Caco-2 (cell line): ENCODE measurements at regions of chr13 and their contacts with region 1.

Region 1: GRCh38 chr13:80945328-80945727 is 604.4 kb upstream of the SPRY2 start:
- DNase-seq: peak; percentile 8 to 38
- H3K4me3 ChIP-seq: no peak overlapping the region
- H3K4me3 Mint-ChIP-seq: no peak overlapping the region
- H3K27ac Mint-ChIP-seq: no peak overlapping the region
- H3K4me1 ChIP-seq: no peaks in the 10 kb centered on the region
- H3K4me1 Mint-ChIP-seq: no peaks in the 10 kb centered on the region
- H3K27me3 ChIP-seq: no peaks in the 10 kb centered on the region
- H3K27me3 Mint-ChIP-seq: no peaks in the 10 kb centered on the region
- CTCF ChIP-seq: no peak

Region 2: DNA sequence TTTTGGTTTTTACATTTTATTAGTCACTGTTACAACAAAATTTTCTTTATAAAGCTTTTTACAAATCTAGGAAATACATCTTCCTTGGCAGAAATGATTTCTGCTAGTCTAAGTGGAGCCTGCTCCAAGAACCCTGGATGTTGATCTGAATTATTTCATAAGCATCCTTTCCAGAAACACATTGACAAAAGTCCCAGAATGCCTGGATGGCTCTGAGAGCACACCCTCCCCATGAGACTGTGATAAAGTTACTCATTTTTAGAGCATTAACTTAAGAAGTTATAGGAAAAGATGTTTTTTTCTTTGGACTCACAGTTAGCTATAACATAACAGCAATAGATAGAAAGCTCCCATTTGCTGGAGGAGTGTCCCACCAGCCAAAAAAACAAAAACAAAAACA is 44.8 kb before region 1 on chr13:
- CTCF ChIA-PET with region 1: no interaction called
- POLR2A ChIA-PET with region 1: no interaction called
- intact Hi-C with region 1: loop called (anchors 1 kb)
- DNase-seq: no peak
- H3K4me3 ChIP-seq: no peak overlapping the region
- H3K4me3 Mint-ChIP-seq: no peak overlapping the region
- H3K27ac Mint-ChIP-seq: no peak overlapping the region
- H3K4me1 ChIP-seq: no peaks in the 10 kb centered on the region
- H3K4me1 Mint-ChIP-seq: no peaks in the 10 kb centered on the region
- H3K27me3 ChIP-seq: no peaks in the 10 kb centered on the region; the same call in 1 of the 2 replicates
- H3K27me3 Mint-ChIP-seq: no peaks in the 10 kb centered on the region
- CTCF ChIP-seq: no peak

Region 3: DNA sequence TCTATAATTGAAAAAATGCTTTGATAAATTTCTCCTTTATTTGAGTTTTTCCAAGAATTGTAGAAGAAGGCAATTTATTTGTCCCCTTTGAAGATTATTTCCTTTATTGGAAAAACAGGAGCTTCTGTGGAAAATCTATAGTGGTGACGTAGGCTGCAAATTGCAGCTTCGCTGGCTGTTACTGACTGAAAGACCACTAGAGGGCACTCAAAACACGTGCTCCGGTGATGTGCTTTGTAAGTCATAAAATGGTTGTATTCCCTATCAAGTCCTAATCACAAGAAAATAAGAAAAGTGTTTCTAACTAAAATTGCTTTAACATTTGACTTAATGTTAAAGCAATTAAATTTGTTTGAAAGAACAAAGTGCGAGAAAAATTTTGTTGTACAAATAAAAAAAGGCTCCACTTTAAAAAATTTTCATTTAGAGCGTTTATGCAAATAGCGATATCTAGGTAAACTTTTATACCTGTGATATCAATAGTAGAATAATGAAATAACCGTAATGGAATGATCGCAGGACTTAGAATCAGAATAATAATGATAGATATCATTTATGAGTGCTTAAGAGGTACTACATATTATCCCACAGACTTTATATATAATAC is 33.8 kb after region 1 on chr13:
- CTCF ChIA-PET with region 1: no interaction called
- POLR2A ChIA-PET with region 1: no interaction called
- intact Hi-C with region 1: no loop called
- DNase-seq: peak; percentile 67 to 69
- H3K4me3 ChIP-seq: no peak overlapping the region
- H3K4me3 Mint-ChIP-seq: no peak overlapping the region
- H3K27ac Mint-ChIP-seq: no peak overlapping the region
- H3K4me1 ChIP-seq: peaks cover 8% of the 10 kb centered on the region
- H3K4me1 Mint-ChIP-seq: no peaks in the 10 kb centered on the region
- H3K27me3 ChIP-seq: no peaks in the 10 kb centered on the region
- H3K27me3 Mint-ChIP-seq: no peaks in the 10 kb centered on the region
- CTCF ChIP-seq: peak; percentile 89 to 90

Region 4: GRCh38 chr13:81012031-81012430 is 66.7 kb after region 1 on chr13:
- CTCF ChIA-PET with region 1: no interaction called
- POLR2A ChIA-PET with region 1: no interaction called
- intact Hi-C with region 1: no loop called
- DNase-seq: peak in 1 of 2 experiments; percentile 12
- H3K4me3 ChIP-seq: no peak overlapping the region
- H3K4me3 Mint-ChIP-seq: no peak overlapping the region
- H3K27ac Mint-ChIP-seq: no peak overlapping the region
- H3K4me1 ChIP-seq: no peaks in the 10 kb centered on the region
- H3K4me1 Mint-ChIP-seq: no peaks in the 10 kb centered on the region
- H3K27me3 ChIP-seq: no peaks in the 10 kb centered on the region
- H3K27me3 Mint-ChIP-seq: peaks cover 6% of the 10 kb centered on the region
- CTCF ChIP-seq: no peak

Region 5: DNA sequence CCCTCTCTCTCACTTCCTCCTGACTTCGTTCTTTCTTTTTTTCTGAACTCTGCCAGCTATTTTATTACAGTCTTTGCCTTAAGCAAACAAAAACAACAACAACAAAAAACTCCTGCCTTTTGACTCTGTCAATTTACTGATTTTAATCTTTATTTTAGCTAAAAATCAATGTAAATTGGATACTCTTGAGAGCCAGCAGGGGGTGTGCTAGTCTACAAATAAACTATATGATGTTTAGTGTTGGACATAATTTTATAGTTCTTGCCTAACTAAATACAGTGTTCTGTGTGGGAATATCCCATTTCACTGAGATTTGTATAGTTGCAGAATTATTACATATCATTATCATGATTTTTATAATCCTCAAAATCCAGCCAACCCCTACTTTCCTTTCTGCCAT is 595.4 kb after region 1 on chr13:
- CTCF ChIA-PET with region 1: no interaction called
- POLR2A ChIA-PET with region 1: no interaction called
- intact Hi-C with region 1: no loop called
- DNase-seq: no peak
- H3K4me3 ChIP-seq: no peak overlapping the region
- H3K4me3 Mint-ChIP-seq: no peak overlapping the region
- H3K27ac Mint-ChIP-seq: no peak overlapping the region
- H3K4me1 ChIP-seq: no peaks in the 10 kb centered on the region
- H3K4me1 Mint-ChIP-seq: no peaks in the 10 kb centered on the region
- H3K27me3 ChIP-seq: no peaks in the 10 kb centered on the region
- H3K27me3 Mint-ChIP-seq: no peaks in the 10 kb centered on the region
- CTCF ChIP-seq: peak in 1 of 2 experiments; percentile 26